ENCODE measurements at regions of chr20 and their contacts with region 1.

Region 1: DNA sequence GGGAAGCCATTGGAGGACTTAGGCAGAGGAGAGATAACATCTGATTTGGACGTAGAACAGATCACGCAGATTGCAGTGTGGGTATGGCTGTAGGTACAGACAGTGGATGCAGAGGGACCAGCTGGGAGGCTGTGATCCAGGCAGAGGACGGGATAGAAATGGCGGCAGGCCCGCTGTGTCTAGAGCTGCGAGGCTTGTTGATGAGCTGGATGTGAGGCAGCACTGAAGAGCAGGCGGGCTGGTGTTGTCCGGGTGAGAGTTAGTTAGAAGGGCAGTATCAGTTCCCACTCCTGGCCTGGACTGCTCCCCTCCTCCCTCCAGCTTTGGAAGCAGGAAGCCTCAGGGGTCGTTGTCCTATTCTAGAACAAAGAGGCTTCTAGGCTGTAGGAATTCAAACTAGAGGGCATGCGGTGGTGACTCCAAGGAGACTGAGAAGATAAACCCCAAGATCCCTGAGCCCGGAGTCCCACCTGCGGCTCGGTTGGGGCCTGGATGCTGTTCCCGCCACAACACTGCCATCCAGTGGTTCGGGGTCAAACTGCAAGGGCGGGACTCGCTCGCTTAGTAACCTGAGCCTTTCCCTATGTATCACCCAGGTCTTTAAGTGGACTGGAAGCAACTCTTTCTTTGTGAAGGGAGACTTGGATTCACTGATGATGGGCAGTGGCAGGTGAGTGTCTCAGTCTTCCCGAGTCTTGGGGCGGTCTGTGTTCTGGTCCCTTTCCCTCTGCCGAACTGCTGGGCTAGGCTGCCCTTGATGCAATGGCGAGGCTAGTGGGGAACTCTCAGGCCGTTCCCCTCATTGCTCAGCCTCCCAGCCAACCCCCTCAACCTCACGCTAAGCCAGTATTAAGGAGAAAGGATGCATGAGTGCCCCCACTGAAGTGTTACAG is 11.2 kb downstream of the TLDC2 start:
- DNase-seq: peak; percentile 94
- H3K4me3 Mint-ChIP-seq: no peak overlapping the region
- H3K27ac Mint-ChIP-seq: peak overlapping the region; percentile 70
- H3K4me1 Mint-ChIP-seq: peaks cover 8% of the 10 kb centered on the region
- H3K27me3 Mint-ChIP-seq: no peaks in the 10 kb centered on the region

Region 2: DNA sequence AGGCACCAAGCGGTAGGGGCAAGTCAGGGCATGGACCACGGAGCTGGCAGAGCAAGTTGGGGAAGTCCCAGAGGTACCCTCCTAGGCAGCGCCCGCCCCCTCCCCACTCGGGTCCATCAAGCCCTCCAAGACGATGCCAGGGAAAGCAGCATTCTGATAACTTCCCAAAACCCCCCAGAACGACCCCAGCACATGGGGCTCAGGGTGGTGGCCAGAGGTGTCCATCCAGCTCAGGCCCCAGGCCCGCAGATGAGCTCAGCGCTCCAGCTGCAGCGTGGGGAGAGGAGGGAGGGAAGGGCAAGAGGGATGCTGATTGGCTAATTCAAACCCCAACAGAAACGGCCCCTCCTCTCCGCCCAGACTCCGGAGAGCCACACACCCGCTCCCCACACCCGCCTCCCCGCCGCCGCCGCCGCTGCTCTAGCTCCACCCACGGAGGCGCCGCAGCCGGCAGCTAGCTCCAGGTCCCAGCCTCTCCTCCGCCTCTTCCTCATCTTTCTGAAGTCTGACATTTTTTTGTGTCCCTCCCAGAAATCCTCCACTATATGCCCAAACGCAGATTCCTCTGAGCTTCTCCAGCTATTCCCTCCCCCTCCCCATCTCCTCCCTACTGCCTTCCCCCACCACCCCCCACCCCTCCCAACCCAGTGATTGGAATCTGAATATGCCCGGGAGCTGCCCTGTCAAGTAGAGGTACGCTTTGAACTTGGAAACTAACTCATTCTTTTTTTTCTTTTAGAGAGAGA is 51.5 kb before region 1 on chr20:
- intact Hi-C with region 1: loop called (anchors 1 kb)
- DNase-seq: peak; percentile 96
- H3K4me3 Mint-ChIP-seq: peak overlapping the region; percentile 88
- H3K27ac Mint-ChIP-seq: peak overlapping the region; percentile 91
- H3K4me1 Mint-ChIP-seq: peaks cover 19% of the 10 kb centered on the region
- H3K27me3 Mint-ChIP-seq: no peaks in the 10 kb centered on the region

Region 3: GRCh38 chr20:36866681-36867495 is 20.2 kb before region 1 on chr20:
- intact Hi-C with region 1: no loop called
- DNase-seq: no peak
- H3K4me3 Mint-ChIP-seq: no peak overlapping the region
- H3K27ac Mint-ChIP-seq: no peak overlapping the region
- H3K4me1 Mint-ChIP-seq: peaks cover 8% of the 10 kb centered on the region
- H3K27me3 Mint-ChIP-seq: peaks cover 25% of the 10 kb centered on the region

Region 4: DNA sequence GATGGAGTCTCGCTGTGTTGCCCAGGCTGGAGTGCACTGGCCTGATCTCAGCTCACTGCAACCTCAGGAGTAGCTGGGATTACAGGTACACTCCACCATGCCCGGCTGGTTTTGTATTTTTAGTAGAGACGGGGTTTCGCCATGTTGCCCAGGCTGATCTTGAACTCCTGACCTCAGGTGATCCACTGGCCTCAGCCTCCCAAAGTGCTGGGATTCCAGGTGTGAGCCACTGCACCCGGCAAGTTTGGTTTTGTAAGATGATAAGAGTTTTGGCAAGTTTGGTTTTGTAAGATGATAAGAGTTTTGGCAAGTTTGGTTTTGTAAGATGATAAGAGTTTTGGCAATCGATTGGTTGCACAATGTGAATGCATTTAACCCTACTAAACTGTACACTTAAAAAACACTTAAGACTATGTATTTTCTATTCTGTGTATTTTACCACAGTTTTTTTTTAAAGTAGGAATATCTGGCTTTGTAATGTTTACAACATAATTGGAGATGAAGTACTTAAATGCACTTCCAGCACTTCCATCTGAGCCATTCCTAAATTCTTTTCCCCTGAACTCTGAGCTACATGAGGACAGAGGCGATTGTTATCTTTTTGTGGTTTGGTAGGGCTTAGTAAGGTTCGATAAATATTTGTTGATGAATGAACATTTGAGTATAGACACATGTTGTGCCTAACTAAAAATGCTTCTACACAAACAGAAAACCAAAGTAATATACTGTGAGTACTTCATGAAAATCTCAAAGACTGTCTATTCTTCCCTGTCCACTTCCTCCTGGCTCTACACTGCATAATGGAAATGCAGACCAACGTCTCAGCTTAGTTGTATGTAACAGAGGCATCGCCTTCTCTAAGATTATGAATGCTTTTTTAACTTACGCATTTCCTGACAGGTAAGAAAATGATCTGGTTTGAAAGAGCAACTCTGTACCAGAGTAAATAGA is 45.6 kb after region 1 on chr20:
- intact Hi-C with region 1: no loop called
- DNase-seq: no peak
- H3K4me3 Mint-ChIP-seq: no peak overlapping the region
- H3K27ac Mint-ChIP-seq: peak overlapping the region; percentile 72
- H3K4me1 Mint-ChIP-seq: peaks cover 35% of the 10 kb centered on the region
- H3K27me3 Mint-ChIP-seq: no peaks in the 10 kb centered on the region

Measured in activated CD4-positive, alpha-beta T cell treated with anti-CD3 and anti-CD28 coated beads, Interleukin-2, amount 10 ng/mL, durations not matched to agents 24 days and 14 days (primary cell).